Lower leg skin (tissue), 4 donors: ENCODE measurements at regions of chr5 and their contacts with region 1.

Region 1: GRCh38 chr5:179930788-179931473 is 23.2 kb upstream of the TBC1D9B start:
- DNase-seq: no peak
- H3K4me3 ChIP-seq: no peak overlapping the region
- CTCF ChIP-seq: no peak
- POLR2A ChIP-seq: no peak

Region 2: DNA sequence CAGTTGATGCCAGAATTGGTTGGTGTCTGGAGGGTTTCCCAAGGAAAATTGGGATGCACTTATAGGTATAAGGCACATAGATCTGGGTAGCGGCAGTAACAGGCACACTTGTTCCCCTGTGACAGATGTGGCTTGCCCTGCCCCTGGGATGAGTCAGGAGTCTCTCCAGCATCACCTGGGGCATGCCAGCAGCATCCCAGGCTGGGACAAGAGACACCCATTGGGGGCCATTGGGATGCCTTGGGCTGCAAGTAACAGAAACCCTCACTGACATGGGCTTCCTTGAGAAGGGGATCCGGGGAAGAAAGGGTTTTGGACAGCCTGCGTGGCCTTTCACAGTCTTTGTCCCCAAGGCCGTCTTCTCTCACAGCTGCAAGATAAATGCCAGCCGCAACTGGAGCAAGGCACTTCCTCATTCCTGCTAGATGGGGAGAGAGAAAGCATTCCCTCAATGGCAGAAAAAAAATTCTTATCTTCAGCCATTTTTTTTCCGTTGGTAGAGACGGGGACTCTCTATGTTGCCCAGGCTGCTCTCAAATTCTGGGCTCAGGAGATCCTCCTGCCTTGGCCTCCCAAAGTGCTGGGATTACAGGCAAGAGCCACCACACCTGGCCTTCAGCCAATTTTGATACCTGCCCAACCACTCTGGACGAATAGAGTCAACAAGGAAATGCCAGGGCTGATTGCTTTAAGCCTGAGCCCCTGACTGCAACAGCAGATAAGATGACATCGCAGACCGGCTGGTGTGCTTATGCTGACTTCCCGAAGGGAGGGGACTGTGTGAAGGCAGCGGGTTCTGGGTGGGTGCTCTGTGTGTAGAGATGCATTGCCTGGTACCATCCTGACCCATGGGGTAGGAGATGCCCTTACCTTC is 154.0 kb after region 1 on chr5:
- intact Hi-C with region 1: loop called (anchors 10 kb)
- DNase-seq: no peak
- H3K4me3 ChIP-seq: no peak overlapping the region
- CTCF ChIP-seq: no peak
- POLR2A ChIP-seq: no peak

Region 3: GRCh38 chr5:180575571-180575970 is 644.6 kb after region 1 on chr5:
- intact Hi-C with region 1: no loop called
- DNase-seq: no peak
- H3K4me3 ChIP-seq: no peak overlapping the region
- CTCF ChIP-seq: no peak
- POLR2A ChIP-seq: no peak